H1 (cell line): ENCODE measurements at regions of chr12 and their contacts with region 1.

Region 1: GRCh38 chr12:122190842-122191668 is 8.1 kb downstream of the LRRC43 start:
- DNase-seq: peak; percentile 56 to 87
- H3K4me3 ChIP-seq: no peak overlapping the region
- H3K27ac ChIP-seq: no peak overlapping the region
- H3K4me1 ChIP-seq: peaks cover 0 to 4% (median under 1%) of the 10 kb centered on the region in 4 experiments; a peak in 2 of 7 replicates
- H3K27me3 ChIP-seq: no peaks in the 10 kb centered on the region
- CTCF ChIP-seq: peak; percentile 88 to 95 (median 91)
- EP300 ChIP-seq: no peak
- POLR2A ChIP-seq: no peak
- RAD21 ChIP-seq: peak; percentile 91 to 92

Region 2: GRCh38 chr12:122051231-122051876 is 139.7 kb before region 1 on chr12:
- CTCF ChIA-PET with region 1: interaction called, 26 read pairs
- POLR2A ChIA-PET with region 1: no interaction called
- DNase-seq: no peak
- H3K4me3 ChIP-seq: no peak overlapping the region
- H3K27ac ChIP-seq: no peak overlapping the region
- H3K4me1 ChIP-seq: 0 out of 7 replicates have a peak, but pooled peaks cover 0 to 2% (median 0%) of the 10 kb centered on the region in 4 experiments
- H3K27me3 ChIP-seq: no peaks in the 10 kb centered on the region
- CTCF ChIP-seq: no peak
- EP300 ChIP-seq: no peak
- POLR2A ChIP-seq: no peak
- RAD21 ChIP-seq: no peak

Region 3: DNA sequence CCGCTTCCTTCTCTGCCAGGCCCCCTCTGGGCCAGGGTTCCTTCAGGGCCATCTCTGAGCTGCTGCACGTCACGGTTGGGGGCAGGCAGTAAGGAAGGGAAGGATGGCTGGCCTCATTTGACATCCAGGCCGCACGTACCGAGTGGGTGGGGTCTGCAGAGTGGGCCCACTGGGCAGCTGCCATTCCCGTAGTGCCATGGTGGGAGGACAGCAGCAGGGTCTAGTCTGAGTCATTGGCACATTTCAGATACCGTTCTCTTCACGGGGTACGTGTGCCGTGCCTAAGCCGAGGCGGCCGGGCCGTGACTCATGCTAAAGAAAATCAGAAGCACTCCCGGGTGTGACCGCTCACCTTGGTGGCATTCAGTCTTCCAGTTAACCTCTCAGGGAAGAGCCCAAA is 60.9 kb before region 1 on chr12:
- CTCF ChIA-PET with region 1: interaction called, 24 read pairs
- POLR2A ChIA-PET with region 1: interaction called, 3 read pairs
- DNase-seq: no peak
- H3K4me3 ChIP-seq: no peak overlapping the region
- H3K27ac ChIP-seq: no peak overlapping the region
- H3K4me1 ChIP-seq: peaks cover 0 to 4% (median 2%) of the 10 kb centered on the region in 4 experiments; a peak in 2 of 7 replicates
- H3K27me3 ChIP-seq: no peaks in the 10 kb centered on the region
- CTCF ChIP-seq: no peak
- EP300 ChIP-seq: no peak
- POLR2A ChIP-seq: no peak
- RAD21 ChIP-seq: no peak

Region 4: DNA sequence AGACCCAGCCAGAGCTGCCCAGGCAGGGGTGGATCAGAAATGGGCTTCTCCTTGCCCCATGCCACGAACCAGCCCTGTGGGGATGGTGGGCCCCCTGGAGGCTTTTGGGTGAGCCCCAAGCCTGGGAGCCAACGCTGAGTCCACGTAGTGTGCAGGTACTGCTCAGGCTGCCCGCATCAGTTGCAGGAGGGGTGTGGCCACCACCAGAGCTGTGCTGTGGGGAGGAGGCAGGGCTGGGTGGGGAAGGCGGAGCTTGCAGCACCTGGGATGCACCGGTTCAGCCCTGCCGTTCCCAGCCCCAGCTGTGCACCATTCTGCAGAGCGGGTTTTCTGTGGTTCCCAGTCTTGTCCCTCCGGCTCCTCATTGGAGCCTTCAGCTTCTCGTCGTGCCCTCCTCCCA is 53.4 kb before region 1 on chr12:
- CTCF ChIA-PET with region 1: interaction called, 27 read pairs
- POLR2A ChIA-PET with region 1: interaction called, 3 read pairs
- DNase-seq: peak in 1 of 2 experiments; percentile 82
- H3K4me3 ChIP-seq: peak overlapping the region in 3 of 4 experiments; percentile 4 to 37 (median 10); a peak in 2 of 8 replicates
- H3K27ac ChIP-seq: 0 out of 2 replicates have a peak overlapping the region, but pooled peaks have one; percentile 29
- H3K4me1 ChIP-seq: peaks cover 0 to 8% (median 3%) of the 10 kb centered on the region in 4 experiments; a peak in 5 of 7 replicates
- H3K27me3 ChIP-seq: no peaks in the 10 kb centered on the region; a peak in 1 of 7 replicates
- CTCF ChIP-seq: no peak
- EP300 ChIP-seq: no peak
- POLR2A ChIP-seq: no peak
- RAD21 ChIP-seq: no peak

Region 5: GRCh38 chr12:122159882-122160281 is 31.2 kb before region 1 on chr12:
- CTCF ChIA-PET with region 1: interaction called, 16 read pairs
- POLR2A ChIA-PET with region 1: no interaction called
- DNase-seq: no peak
- H3K4me3 ChIP-seq: no peak overlapping the region
- H3K27ac ChIP-seq: no peak overlapping the region
- H3K4me1 ChIP-seq: no peaks in the 10 kb centered on the region; a peak in 1 of 7 replicates
- H3K27me3 ChIP-seq: no peaks in the 10 kb centered on the region
- CTCF ChIP-seq: peak in 1 of 3 experiments; percentile 21; a peak in 1 of 4 replicates
- EP300 ChIP-seq: no peak
- POLR2A ChIP-seq: no peak
- RAD21 ChIP-seq: peak; percentile 41 to 50

Region 6: DNA sequence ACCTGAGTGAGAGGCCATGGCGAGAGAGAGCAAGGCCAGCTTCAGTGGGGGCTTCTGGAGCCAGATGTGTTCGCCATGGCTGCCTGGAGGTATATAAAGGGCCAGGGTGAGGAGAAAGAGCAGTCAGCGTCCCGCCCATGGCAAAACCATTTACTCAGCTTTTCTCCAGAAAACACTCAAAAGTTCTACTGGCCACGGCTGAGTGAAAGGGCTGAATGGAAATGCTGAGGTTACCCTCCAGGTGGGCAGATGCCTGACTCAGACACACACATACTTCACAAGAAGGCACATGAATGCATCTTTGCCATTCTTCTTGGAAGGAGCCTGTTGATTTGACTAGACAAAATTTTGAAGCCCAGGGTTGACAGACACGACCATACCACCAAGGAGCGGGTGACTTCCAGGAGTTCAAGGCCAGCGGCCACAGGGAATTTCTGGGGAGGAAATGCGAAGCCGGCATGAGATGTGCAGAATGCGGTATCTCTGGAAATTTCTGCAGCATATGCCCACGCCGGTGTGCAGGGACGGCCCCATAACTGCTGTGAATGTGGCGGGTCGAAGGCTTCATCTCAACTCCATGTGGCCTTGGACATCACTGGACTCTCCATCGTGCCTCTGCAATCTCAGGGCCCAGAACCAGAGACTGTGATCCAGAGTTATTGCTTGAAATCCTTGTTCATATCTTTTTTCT is 16.8 kb before region 1 on chr12 and contains the start of gene IL31:
- CTCF ChIA-PET with region 1: interaction called, 17 read pairs
- POLR2A ChIA-PET with region 1: no interaction called
- DNase-seq: no peak
- H3K4me3 ChIP-seq: no peak within 1 kb of the TSS
- H3K27ac ChIP-seq: no peak within 1 kb of the TSS
- H3K4me1 ChIP-seq: no peaks in the 10 kb centered on the region
- H3K27me3 ChIP-seq: peaks cover 0 to 3% (median 0%) of the 10 kb centered on the region in 4 experiments; a peak in 1 of 7 replicates
- CTCF ChIP-seq: no peak
- EP300 ChIP-seq: no peak
- POLR2A ChIP-seq: no peak
- RAD21 ChIP-seq: no peak
- total RNA-seq, gene IL31: not detected in 2 replicates

Region 7: DNA sequence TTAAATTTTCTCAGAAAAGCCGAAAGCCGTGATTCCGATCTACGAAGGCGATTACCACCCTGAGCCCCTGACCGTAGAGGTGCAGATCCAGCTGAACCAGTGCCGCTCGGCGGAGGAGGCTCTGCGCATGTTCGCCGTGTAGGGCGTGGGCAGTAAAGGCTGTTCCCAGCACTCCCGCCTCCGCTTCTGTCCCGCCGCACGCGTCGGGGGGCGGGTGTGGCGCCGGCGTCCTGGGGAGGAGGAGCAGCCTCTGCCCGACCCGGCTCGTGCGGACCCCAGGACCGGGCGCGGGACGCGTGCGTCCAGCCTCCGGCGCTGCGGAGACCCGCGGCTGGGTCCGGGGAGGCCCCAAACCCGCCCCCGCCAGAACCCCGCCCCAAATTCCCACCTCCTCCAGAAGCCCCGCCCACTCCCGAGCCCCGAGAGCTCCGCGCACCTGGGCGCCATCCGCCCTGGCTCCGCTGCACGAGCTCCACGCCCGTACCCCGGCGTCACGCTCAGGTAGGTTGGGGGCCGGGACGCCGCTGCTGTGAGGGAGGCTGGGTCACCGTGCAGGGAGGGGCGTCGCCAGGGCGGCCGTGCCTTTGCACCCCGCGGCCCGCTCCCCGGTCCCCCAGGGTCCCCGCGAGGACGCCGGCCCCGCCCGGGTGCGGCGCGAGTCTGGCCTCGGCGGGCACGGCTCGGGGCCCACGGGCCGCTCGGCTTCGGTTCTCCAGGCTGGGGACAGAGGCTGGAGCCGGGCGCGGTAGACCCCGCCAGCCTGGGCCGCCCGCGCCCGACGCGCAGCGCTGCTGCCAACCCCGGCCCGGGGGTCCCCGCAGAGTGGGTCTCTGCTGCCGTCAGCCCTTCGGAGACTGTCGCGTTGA is 12.5 kb after region 1 on chr12 and contains the start of gene B3GNT4:
- CTCF ChIA-PET with region 1: interaction called, 21 read pairs
- POLR2A ChIA-PET with region 1: interaction called, 6 read pairs
- DNase-seq: peak in 1 of 2 experiments; percentile 87
- H3K4me3 ChIP-seq: peak within 1 kb of the TSS; percentile 29 to 74 (median 54)
- H3K27ac ChIP-seq: no peak within 1 kb of the TSS
- H3K4me1 ChIP-seq: peaks cover 0 to 10% (median 3%) of the 10 kb centered on the region in 4 experiments; a peak in 5 of 7 replicates
- H3K27me3 ChIP-seq: peaks cover 9 to 44% (median 27%) of the 10 kb centered on the region in 4 experiments; a peak in 6 of 7 replicates
- CTCF ChIP-seq: no peak
- EP300 ChIP-seq: peak in 1 of 2 experiments; percentile 42; a peak in 1 of 3 replicates
- POLR2A ChIP-seq: no peak
- RAD21 ChIP-seq: no peak
- total RNA-seq, gene B3GNT4: 1.4 and 1.9 TPM in 2 replicates

Region 8: GRCh38 chr12:122309564-122310121 is 118.6 kb after region 1 on chr12:
- CTCF ChIA-PET with region 1: no interaction called
- POLR2A ChIA-PET with region 1: no interaction called
- DNase-seq: peak in 1 of 2 experiments; percentile 36
- H3K4me3 ChIP-seq: no peak overlapping the region
- H3K27ac ChIP-seq: no peak overlapping the region
- H3K4me1 ChIP-seq: no peaks in the 10 kb centered on the region; a peak in 1 of 7 replicates
- H3K27me3 ChIP-seq: no peaks in the 10 kb centered on the region
- CTCF ChIP-seq: no peak
- EP300 ChIP-seq: no peak
- POLR2A ChIP-seq: no peak
- RAD21 ChIP-seq: no peak